GM12878 (cell line): ENCODE measurements at regions of chr3 and their contacts with region 1.

Region 1: DNA sequence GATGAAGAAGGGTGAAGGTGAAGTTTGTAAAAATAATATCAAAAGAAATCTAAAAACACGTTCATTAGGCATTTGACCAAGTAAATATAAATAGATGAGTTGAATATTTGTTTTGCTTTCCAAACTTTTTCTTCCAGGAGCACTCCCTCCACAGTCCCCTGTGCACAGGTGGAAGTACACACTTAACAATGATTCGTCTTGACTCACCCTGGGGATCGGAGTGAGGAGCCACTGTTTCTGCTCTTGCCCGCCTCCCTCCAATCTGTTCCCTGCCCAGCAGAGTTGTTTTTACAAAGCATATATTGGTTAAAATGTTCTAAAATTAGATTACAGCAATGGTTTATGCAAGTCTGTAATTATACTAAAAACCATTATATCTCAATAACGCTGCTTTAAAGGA is 175.1 kb downstream of the PTPRG start:
- DNase-seq: no peak
- ATAC-seq: no peak
- H3K4me3 ChIP-seq: no peak overlapping the region
- H3K27ac ChIP-seq: no peak overlapping the region
- H3K4me1 ChIP-seq: no peaks in the 10 kb centered on the region
- H3K27me3 ChIP-seq: no peaks in the 10 kb centered on the region
- CTCF ChIP-seq: no peak
- EP300 ChIP-seq: no peak
- POLR2A ChIP-seq: no peak
- RAD21 ChIP-seq: no peak

Region 2: DNA sequence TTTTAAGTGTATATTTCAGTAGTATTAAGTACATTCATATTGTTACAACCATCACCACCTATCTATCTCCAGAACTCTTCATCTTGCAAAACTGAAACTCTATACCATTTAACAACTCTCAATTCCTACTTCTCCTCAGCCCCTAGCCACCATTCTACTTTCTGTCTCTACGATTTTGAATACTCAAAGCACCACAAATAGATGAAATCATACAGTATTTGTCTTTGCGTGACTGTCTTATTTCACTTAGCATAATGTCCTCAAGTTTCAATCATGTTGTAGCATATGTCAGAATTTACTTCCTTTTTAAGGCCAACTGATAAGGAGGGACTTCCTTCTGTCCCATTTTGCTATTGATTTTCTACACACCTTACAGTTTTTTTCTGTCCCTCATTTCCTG is 1078.5 kb before region 1 on chr3:
- CTCF ChIA-PET with region 1: no interaction called
- POLR2A ChIA-PET with region 1: no interaction called
- RAD21 ChIA-PET with region 1: no interaction called
- SMC1A ChIA-PET with region 1: no interaction called
- in situ Hi-C with region 1: no loop called
- intact Hi-C with region 1: no loop called
- DNase-seq: peak; percentile 61
- ATAC-seq: peak; percentile 97
- H3K4me3 ChIP-seq: no peak overlapping the region
- H3K27ac ChIP-seq: no peak overlapping the region
- H3K4me1 ChIP-seq: no peaks in the 10 kb centered on the region
- H3K27me3 ChIP-seq: no peaks in the 10 kb centered on the region
- CTCF ChIP-seq: no peak
- EP300 ChIP-seq: no peak; a peak in 2 of 4 replicates
- POLR2A ChIP-seq: no peak
- RAD21 ChIP-seq: no peak

Region 3: GRCh38 chr3:61758839-61759238 is 22.3 kb after region 1 on chr3:
- CTCF ChIA-PET with region 1: interaction called, 3 read pairs
- POLR2A ChIA-PET with region 1: no interaction called
- RAD21 ChIA-PET with region 1: no interaction called
- SMC1A ChIA-PET with region 1: interaction called, 17 read pairs
- in situ Hi-C with region 1: no loop called
- intact Hi-C with region 1: no loop called
- DNase-seq: no peak
- ATAC-seq: peak; percentile 69
- H3K4me3 ChIP-seq: no peak overlapping the region
- H3K27ac ChIP-seq: no peak overlapping the region
- H3K4me1 ChIP-seq: no peaks in the 10 kb centered on the region
- H3K27me3 ChIP-seq: no peaks in the 10 kb centered on the region
- CTCF ChIP-seq: no peak
- EP300 ChIP-seq: no peak
- POLR2A ChIP-seq: no peak
- RAD21 ChIP-seq: no peak